ENCODE measurements at regions of chr6 and their contacts with region 1.

Region 1: GRCh38 chr6:291697-292505 is at the start of gene DUSP22:
- DNase-seq: peak; percentile 70 to 90 (median 78)
- H3K4me3 ChIP-seq: peak within 1 kb of the TSS; percentile 59 to 63
- H3K4me3 Mint-ChIP-seq: peak within 1 kb of the TSS; percentile 87 to 98 (median 94)
- H3K27ac ChIP-seq: peak within 1 kb of the TSS; percentile 75
- H3K27ac Mint-ChIP-seq: peak within 1 kb of the TSS; percentile 93 to 98 (median 95)
- H3K4me1 ChIP-seq: peaks cover 26% of the 10 kb centered on the region
- H3K4me1 Mint-ChIP-seq: peaks cover 25 to 56% (median 37%) of the 10 kb centered on the region in 4 donors
- H3K27me3 ChIP-seq: no peaks in the 10 kb centered on the region
- H3K27me3 Mint-ChIP-seq: no peaks in the 10 kb centered on the region
- total RNA-seq, gene DUSP22: 43.4 to 49.4 TPM

Region 2: DNA sequence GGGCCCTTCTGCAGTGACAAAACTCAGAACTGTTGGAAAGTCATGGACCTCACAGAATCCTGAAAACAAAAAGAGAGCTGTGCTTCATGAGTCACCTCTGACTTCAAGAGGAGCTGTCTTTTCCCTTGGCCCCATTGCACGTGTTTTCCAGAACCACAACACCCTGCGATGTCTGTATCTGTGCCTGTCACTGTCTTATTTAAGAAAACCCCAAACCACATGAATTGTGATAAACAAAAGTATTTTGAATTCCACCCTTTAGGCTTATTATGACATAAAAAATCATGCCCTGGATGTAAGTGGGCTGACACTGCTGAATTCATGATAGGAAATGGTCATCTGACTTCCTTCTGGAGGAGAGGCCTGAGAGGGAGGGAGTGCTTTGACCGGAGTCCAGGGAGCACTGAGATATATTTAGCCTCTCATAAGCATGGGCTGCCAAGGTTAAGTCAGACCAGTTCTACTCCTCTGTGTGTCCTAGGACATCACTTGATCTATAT is 96.0 kb before region 1 on chr6:
- CTCF ChIA-PET with region 1: interaction called, 4 read pairs
- POLR2A ChIA-PET with region 1: interaction called, 24 read pairs
- intact Hi-C with region 1: loop called (anchors 1 kb)
- DNase-seq: peak; percentile 38 to 79 (median 46)
- H3K4me3 ChIP-seq: no peak overlapping the region
- H3K4me3 Mint-ChIP-seq: peak overlapping the region in 5 of 8 donors; percentile 22 to 58 (median 47)
- H3K27ac ChIP-seq: no peak overlapping the region
- H3K27ac Mint-ChIP-seq: peak overlapping the region; percentile 2 to 83 (median 72)
- H3K4me1 ChIP-seq: peaks cover 33% of the 10 kb centered on the region
- H3K4me1 Mint-ChIP-seq: peaks cover 35 to 47% (median 39%) of the 10 kb centered on the region in 4 donors
- H3K27me3 ChIP-seq: no peaks in the 10 kb centered on the region
- H3K27me3 Mint-ChIP-seq: no peaks in the 10 kb centered on the region

Region 3: DNA sequence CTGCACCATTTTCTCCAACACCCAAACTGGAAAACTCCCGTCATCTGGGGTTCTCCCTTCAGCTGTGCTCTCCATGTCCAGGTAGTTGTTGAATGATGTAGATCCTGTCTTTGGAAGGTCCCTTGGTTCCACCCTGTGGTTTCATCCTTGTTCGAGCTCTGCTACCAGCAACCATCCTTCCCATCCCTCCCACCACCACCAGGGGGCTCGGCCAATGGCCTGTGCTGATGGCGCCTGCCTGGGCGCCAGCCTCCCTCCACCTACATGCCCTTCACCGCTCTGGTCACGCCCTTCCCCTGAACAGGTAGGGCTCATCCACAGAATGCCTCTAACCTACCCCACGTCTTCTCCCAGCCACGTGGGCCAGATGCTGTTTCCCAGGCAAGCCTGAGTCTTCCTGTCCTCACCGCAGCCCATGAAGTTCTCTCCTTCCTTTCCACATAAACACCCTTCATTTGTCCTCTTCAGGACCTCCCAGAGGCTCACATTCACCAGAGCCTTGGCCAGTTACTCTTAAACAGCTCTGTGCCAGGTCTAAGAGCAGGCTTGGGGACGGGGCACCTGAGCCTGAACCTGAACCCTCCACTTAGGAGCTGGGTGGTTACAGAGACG is 74.7 kb before region 1 on chr6:
- CTCF ChIA-PET with region 1: interaction called, 5 read pairs
- POLR2A ChIA-PET with region 1: interaction called, 4 read pairs
- intact Hi-C with region 1: loop called (anchors 5 kb)
- DNase-seq: peak in 1 of 5 donors; percentile 13
- H3K4me3 ChIP-seq: no peak overlapping the region
- H3K4me3 Mint-ChIP-seq: no peak overlapping the region
- H3K27ac ChIP-seq: no peak overlapping the region
- H3K27ac Mint-ChIP-seq: peak overlapping the region in 2 of 7 donors; percentile 3 to 44
- H3K4me1 ChIP-seq: peaks cover 20% of the 10 kb centered on the region
- H3K4me1 Mint-ChIP-seq: peaks cover 14 to 50% (median 30%) of the 10 kb centered on the region in 4 donors
- H3K27me3 ChIP-seq: no peaks in the 10 kb centered on the region
- H3K27me3 Mint-ChIP-seq: no peaks in the 10 kb centered on the region

Region 4: DNA sequence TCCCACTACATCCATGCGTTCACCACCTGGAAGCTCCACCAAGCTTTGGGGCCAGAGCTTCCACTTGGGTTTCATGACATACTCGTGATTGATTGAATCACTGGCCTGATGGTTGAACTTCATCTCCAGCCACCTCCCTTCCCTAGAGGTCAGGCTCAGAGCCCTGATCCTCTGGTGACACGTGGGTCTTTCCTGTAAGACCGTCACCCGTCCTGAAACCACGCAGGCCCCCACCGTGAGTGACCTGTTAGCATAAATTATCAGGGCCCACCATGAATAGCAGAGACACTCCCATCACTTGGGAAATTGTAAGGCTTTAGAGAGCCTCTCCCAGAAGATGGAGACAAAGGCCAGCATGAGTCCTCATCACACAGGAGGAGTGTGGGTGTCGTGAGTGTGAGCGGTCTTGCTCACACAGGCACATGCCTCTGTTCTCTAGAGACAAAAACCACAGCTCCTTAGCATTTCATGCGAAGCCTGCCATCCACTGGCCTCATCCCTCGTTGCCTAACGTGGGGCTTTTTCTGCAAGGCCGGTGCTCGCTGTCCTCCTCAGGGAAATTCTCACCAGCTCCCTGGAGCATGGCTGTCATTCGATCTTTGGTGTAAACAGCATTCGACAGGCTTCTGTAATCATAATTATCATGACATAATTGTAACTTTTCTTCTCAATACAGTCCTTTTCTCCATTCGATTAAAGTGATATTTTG is 64.7 kb before region 1 on chr6:
- CTCF ChIA-PET with region 1: no interaction called
- POLR2A ChIA-PET with region 1: interaction called, 15 read pairs
- intact Hi-C with region 1: no loop called
- DNase-seq: no peak
- H3K4me3 ChIP-seq: no peak overlapping the region
- H3K4me3 Mint-ChIP-seq: no peak overlapping the region
- H3K27ac ChIP-seq: no peak overlapping the region
- H3K27ac Mint-ChIP-seq: no peak overlapping the region
- H3K4me1 ChIP-seq: peaks cover 24% of the 10 kb centered on the region
- H3K4me1 Mint-ChIP-seq: peaks cover 14 to 44% (median 32%) of the 10 kb centered on the region in 4 donors
- H3K27me3 ChIP-seq: no peaks in the 10 kb centered on the region
- H3K27me3 Mint-ChIP-seq: peaks cover 0 to 1% of the 10 kb centered on the region in 2 donors

Region 5: DNA sequence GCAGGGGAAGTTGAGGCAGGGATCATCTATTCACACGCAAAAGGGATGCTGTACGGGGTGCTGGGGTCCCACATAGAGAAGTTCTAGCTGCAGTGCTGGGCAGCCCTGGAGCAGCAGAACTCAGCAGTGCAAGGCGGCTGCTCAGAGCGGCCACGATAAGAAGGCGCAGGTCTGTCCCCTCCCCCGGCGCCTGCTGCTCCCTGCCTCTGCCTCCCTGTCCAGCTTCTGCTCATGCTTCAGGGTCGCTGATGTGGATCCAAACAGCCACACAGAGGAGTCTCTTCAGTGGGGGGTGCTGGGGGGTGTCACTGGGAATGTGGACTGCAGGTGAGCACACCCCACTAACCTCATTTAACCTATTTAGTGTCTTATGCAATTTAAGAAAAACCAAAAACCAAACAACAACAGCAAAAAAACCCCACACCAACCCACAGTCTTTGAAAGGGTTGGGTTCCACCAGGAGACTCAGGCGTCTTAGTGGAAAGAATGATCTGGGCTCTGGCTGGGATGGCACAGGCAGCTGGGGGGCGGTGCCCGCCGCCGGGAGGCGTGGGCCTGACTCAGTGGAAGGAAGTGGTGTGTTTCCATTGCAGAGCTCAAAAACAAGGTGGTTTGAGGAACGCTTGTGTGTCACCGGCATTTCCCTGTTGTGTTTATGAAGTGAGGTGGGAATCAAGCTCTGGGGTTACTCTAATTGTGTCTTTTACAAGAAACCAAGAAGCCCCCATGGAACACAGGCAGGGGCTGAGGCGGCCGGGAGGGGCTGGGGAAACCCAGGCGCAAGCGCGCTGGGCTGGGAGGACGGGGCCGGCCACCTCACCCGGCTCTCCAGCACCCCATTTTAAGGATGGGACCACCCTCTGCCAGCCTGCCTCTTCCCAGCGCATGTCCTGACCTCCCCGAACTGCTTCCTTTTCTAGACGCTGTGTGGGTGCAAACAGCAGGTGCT is 154.8 kb after region 1 on chr6:
- CTCF ChIA-PET with region 1: no interaction called
- POLR2A ChIA-PET with region 1: interaction called, 5 read pairs
- intact Hi-C with region 1: loop called (anchors 1 kb)
- DNase-seq: peak; percentile 67 to 96 (median 76)
- H3K4me3 ChIP-seq: peak overlapping the region; percentile 28 to 60
- H3K4me3 Mint-ChIP-seq: peak overlapping the region; percentile 78 to 92 (median 82)
- H3K27ac ChIP-seq: peak overlapping the region; percentile 54
- H3K27ac Mint-ChIP-seq: peak overlapping the region; percentile 81 to 95 (median 88)
- H3K4me1 ChIP-seq: peaks cover 53% of the 10 kb centered on the region
- H3K4me1 Mint-ChIP-seq: peaks cover 33 to 54% (median 48%) of the 10 kb centered on the region in 4 donors
- H3K27me3 ChIP-seq: no peaks in the 10 kb centered on the region
- H3K27me3 Mint-ChIP-seq: peaks cover 0 to 2% of the 10 kb centered on the region in 2 donors

Region 6: DNA sequence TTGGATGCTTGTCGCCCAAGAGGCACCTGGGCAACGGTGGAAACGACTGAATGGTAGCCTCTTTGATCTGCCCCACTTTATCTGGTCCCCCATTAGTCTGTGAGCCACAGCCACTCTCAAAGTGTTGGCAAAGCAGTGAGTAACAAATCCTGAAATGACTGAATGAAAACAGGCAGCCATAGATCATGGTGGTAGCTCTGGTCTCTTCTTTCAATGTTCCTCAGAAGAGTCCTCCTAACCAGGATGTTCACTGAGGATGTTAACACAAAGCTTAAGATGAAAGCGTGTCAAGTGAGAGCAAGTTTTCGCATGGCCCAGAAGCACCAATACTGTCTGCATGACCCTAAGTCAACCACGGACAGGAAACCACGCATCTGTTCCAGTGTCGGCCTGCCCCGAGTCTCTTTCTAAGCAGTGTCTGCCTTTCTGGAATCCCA is 206.9 kb after region 1 on chr6:
- CTCF ChIA-PET with region 1: no interaction called
- POLR2A ChIA-PET with region 1: no interaction called
- intact Hi-C with region 1: loop called (anchors 10 kb)
- DNase-seq: peak in 1 of 5 donors; percentile 70
- H3K4me3 ChIP-seq: peak overlapping the region in 1 of 2 donors; percentile 25
- H3K4me3 Mint-ChIP-seq: peak overlapping the region; percentile 55 to 83 (median 76)
- H3K27ac ChIP-seq: peak overlapping the region; percentile 19
- H3K27ac Mint-ChIP-seq: peak overlapping the region; percentile 19 to 94 (median 84)
- H3K4me1 ChIP-seq: peaks cover 51% of the 10 kb centered on the region
- H3K4me1 Mint-ChIP-seq: peaks cover 45 to 70% (median 59%) of the 10 kb centered on the region in 4 donors
- H3K27me3 ChIP-seq: no peaks in the 10 kb centered on the region
- H3K27me3 Mint-ChIP-seq: no peaks in the 10 kb centered on the region